ENCODE measurements at regions of chr13 and their contacts with region 1.

Region 1: GRCh38 chr13:23375001-23375971 is 58.2 kb downstream of the SACS start:
- DNase-seq: peak; percentile 99
- ATAC-seq: peak; percentile 89
- H3K4me3 Mint-ChIP-seq: peak overlapping the region; percentile 74
- H3K27ac Mint-ChIP-seq: peak overlapping the region; percentile 60
- H3K4me1 Mint-ChIP-seq: peaks cover 67% of the 10 kb centered on the region
- H3K27me3 Mint-ChIP-seq: no peaks in the 10 kb centered on the region

Region 2: DNA sequence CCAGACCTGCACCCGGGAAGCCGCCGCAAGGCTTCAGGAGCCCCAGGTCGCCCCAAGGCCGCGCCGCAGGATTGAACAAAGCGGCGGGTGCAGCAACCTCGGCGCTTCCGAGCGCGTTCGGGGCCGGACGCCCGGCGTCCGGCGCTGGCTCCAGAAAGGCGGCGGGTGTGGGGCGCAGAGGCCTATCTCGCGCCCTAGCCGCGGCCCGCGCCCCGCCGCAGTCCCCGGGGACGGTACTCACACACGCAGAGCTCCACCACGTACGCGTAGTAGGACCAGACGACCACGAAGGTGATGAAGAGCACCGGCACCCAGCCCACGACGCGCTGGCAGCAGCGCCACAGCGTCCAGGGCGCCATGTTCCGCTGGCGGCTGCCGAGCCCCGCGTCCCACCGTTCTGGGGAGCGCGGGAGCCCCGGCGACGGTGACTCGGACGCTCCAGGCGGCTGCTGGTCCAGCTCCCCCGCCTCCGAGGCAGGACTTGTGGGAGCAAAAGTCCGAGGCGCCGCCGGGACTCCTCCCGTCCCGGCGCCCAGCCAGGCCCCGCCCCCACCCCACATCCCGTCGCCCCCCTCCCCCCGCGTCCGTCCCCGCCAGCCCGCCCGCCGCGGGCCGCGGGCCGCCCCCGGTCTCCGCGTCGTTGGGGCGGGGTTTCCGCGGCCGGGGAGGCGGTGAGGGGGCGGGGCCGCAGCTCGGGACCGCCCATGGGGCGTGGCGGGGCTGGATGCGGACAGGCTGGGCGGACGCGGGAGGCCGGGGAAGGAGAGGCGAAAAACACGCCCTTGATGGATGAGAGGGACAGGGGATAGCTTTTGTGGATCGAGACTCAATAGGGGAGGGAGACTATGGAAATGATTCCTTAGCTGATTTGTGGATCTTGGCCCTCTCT is 1916.2 kb before region 1 on chr13 and contains the start of gene ZDHHC20:
- CTCF ChIA-PET with region 1: no interaction called
- POLR2A ChIA-PET with region 1: no interaction called
- intact Hi-C with region 1: loop called in 1 of 2 experiments (anchors 2 kb)
- DNase-seq: peak; percentile 93
- ATAC-seq: peak; percentile 83
- H3K4me3 Mint-ChIP-seq: peak within 1 kb of the TSS; percentile 93
- H3K27ac Mint-ChIP-seq: peak within 1 kb of the TSS; percentile 88
- H3K4me1 Mint-ChIP-seq: peaks cover 25% of the 10 kb centered on the region
- H3K27me3 Mint-ChIP-seq: no peaks in the 10 kb centered on the region
- total RNA-seq, gene ZDHHC20: 40.2 to 44.9 TPM

Region 3: GRCh38 chr13:23321535-23322241 is 53.6 kb before region 1 on chr13:
- CTCF ChIA-PET with region 1: no interaction called
- POLR2A ChIA-PET with region 1: no interaction called
- intact Hi-C with region 1: loop called in 1 of 2 experiments (anchors 1 kb)
- DNase-seq: peak; percentile 41
- ATAC-seq: peak; percentile 85
- H3K4me3 Mint-ChIP-seq: no peak overlapping the region
- H3K27ac Mint-ChIP-seq: no peak overlapping the region
- H3K4me1 Mint-ChIP-seq: peaks cover 35% of the 10 kb centered on the region
- H3K27me3 Mint-ChIP-seq: peaks cover 13% of the 10 kb centered on the region

Region 4: GRCh38 chr13:23411220-23411619 is 35.9 kb after region 1 on chr13:
- CTCF ChIA-PET with region 1: no interaction called
- POLR2A ChIA-PET with region 1: no interaction called
- intact Hi-C with region 1: no loop called
- DNase-seq: no peak
- ATAC-seq: no peak
- H3K4me3 Mint-ChIP-seq: no peak overlapping the region
- H3K27ac Mint-ChIP-seq: no peak overlapping the region
- H3K4me1 Mint-ChIP-seq: no peaks in the 10 kb centered on the region
- H3K27me3 Mint-ChIP-seq: peaks cover 2% of the 10 kb centered on the region

Region 5: GRCh38 chr13:23674795-23675640 is 299.7 kb after region 1 on chr13:
- CTCF ChIA-PET with region 1: no interaction called
- POLR2A ChIA-PET with region 1: no interaction called
- intact Hi-C with region 1: loop called in 1 of 2 experiments (anchors 5 kb)
- DNase-seq: peak; percentile 43
- ATAC-seq: peak; percentile 66
- H3K4me3 Mint-ChIP-seq: no peak overlapping the region
- H3K27ac Mint-ChIP-seq: no peak overlapping the region
- H3K4me1 Mint-ChIP-seq: peaks cover 21% of the 10 kb centered on the region
- H3K27me3 Mint-ChIP-seq: peaks cover 4% of the 10 kb centered on the region

Region 6: DNA sequence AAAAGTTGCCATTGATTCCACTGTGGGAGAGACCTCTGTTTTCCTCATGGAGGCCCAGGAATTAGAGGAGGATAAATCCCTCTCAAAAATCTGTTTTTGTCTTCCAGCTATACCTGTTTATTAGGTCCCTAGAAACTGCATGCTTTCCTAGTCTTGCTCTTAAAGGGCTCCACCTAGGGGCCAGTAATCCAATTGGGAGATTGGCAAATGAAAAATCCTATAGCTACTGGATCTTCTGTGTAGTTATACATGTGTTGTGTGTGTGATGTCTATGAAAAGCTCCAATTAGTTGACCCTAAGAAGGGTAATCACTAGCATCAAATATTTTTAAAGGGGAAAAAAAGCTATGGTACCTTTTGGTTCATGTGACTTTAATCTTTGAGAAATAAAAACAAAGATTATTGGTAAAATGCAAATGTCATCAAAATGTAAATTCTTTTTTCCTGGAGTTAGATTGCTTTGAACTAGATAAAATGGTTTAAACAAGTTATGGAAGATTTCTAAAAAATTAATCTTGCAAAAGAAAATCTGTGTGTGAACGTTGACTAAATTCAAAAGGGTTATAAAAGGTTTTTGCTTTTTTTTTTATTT is 585.4 kb after region 1 on chr13:
- CTCF ChIA-PET with region 1: no interaction called
- POLR2A ChIA-PET with region 1: no interaction called
- intact Hi-C with region 1: loop called in 1 of 2 experiments (anchors 10 kb)
- DNase-seq: peak; percentile 16
- ATAC-seq: peak; percentile 34
- H3K4me3 Mint-ChIP-seq: no peak overlapping the region
- H3K27ac Mint-ChIP-seq: no peak overlapping the region
- H3K4me1 Mint-ChIP-seq: peaks cover 30% of the 10 kb centered on the region
- H3K27me3 Mint-ChIP-seq: no peaks in the 10 kb centered on the region

Region 7: DNA sequence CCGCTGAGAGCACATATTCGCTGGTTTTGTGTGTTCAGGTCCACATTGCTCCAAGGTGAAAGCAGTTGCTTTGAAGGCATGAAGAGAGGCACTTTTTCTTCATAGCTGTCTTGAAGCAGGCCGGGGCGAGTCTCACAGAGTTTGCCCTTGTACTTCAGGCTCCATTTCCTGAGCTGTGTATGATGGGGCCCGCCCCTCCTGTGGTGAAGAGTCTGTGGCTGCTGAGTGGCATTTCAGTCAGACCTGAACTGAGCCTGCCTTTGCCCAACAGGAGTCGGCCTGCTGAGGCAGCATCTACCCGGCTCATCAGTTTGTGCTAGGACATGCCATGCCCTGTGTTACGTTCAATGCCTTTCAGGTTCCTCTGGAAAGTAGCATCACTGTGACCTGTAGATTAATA is 889.7 kb after region 1 on chr13:
- CTCF ChIA-PET with region 1: no interaction called
- POLR2A ChIA-PET with region 1: no interaction called
- intact Hi-C with region 1: loop called in 1 of 2 experiments (anchors 5 kb)
- DNase-seq: peak; percentile 92
- ATAC-seq: peak; percentile 92
- H3K4me3 Mint-ChIP-seq: peak overlapping the region; percentile 66
- H3K27ac Mint-ChIP-seq: peak overlapping the region; percentile 95
- H3K4me1 Mint-ChIP-seq: peaks cover 92% of the 10 kb centered on the region
- H3K27me3 Mint-ChIP-seq: no peaks in the 10 kb centered on the region

Measured in activated CD4-positive, alpha-beta T cell treated with anti-CD3 and anti-CD28 coated beads for 36 hours (primary cell).